ENCODE measurements at regions of chr5 and their contacts with region 1.

Region 1: DNA sequence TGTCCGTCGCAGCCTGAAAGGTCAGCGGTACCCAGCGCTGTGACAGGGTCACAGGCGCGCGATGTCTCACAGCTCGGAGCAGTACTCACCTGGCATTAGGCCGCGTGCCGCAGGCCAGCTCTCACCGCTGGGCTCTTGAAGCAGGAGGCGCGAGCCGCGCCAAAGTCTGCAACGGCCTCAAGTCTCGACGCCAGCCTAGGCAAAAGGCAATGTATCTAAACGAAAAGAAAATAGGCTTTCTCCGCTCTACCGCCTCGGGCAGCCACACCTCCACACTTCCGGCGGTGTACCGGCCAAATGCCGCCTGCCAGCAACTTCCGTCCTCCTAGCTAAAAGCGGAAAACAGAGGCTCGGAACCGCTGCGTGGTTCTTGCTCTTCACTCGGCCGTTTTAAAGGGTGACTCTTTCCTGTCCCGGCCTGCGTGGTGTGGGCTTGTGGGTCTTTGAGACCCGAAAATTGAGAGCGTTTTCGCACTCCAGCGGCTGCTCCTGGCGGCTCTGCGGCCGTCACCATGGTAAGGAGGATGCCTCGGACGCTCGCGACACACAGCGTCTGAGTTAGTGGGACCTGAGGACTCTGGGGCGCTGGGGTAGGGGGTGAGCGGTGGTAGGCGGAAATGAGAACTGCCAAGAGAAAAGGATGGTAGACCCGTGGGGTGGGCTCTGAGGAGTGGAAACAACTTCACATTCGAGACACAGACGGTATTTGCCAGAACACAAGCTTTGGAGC is at the starts of genes GFM2 and NSA2:
- DNase-seq: peak; percentile 96
- H3K4me3 Mint-ChIP-seq: peak within 1 kb of the TSS; percentile 99
- H3K27ac Mint-ChIP-seq: peak within 1 kb of the TSS; percentile 93
- H3K4me1 Mint-ChIP-seq: peaks cover 39% of the 10 kb centered on the region
- H3K27me3 Mint-ChIP-seq: no peaks in the 10 kb centered on the region
- total RNA-seq, gene GFM2: 27.7 to 28.0 TPM
- total RNA-seq, gene NSA2: 119 to 121 TPM

Region 2: DNA sequence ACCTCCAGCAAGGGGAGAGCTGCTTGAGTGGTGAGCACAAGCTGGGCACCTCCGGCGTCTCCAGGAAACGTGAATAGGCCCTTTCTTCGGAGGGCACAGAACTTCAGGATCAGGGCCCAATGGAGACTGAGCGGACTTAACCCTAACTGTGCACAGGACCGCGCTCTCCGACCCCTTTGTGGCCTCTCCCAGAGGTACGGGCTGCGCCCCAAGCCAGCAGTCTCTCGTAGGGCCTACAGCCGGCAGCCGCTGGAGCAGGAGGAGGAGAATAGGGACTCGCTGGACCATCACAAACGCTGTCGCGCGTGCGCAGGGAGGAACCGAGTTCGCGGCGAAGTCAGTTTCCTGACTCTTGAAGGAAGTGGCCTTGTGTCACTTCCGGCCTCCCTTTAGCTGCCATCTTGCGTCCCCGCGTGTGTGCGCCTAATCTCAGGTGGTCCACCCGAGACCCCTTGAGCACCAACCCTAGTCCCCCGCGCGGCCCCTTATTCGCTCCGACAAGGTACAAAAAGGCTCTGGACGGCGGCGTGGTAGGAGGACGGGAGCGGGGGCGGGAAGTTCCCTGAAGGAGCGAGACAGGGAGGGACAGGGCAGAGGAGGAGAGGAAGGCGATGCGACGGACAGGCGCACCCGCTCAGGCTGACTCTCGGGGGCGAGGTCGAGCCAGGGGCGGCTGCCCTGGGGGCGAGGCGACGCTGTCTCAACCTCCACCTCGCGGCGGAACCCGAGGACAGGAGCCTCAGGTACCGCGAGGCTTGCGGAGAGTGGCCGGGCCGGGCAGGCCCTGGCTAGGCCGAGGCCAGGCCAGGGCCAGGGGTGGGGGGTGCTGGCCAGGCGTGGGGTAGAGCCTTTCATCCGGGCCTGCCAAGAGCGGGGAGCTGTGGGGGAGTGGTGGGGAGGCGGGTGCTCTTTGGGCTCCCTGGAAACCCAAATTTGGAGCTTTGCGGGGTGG is 1268.7 kb before region 1 on chr5 and contains the start of gene BTF3:
- CTCF ChIA-PET with region 1: no interaction called
- intact Hi-C with region 1: loop called (anchors 5 kb)
- DNase-seq: peak; percentile 95
- H3K4me3 Mint-ChIP-seq: peak within 1 kb of the TSS; percentile 97
- H3K27ac Mint-ChIP-seq: peak within 1 kb of the TSS; percentile 96
- H3K4me1 Mint-ChIP-seq: peaks cover 42% of the 10 kb centered on the region
- H3K27me3 Mint-ChIP-seq: peaks cover 3% of the 10 kb centered on the region
- total RNA-seq, gene BTF3: 1,100 to 1,123 TPM

Region 3: DNA sequence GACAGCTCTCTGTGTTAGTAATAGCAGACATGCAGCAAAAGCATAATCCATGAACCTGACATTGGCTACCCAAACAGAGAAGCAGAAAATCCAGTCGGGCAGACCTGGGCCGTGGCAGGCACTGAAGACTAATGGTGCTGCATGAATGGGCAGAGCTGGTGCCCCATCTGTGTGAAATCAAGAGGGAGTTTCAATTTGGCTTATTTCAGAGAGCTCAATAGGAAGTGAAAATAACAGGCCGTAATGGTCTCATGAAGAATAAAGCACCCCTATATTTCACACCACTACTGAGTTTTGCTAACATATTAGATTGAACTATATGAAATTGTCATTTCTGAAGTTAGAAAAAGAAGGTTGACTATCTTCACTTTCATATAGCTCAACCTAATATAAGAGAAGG is 276.2 kb before region 1 on chr5:
- CTCF ChIA-PET with region 1: no interaction called
- intact Hi-C with region 1: no loop called
- DNase-seq: no peak
- H3K4me3 Mint-ChIP-seq: no peak overlapping the region
- H3K27ac Mint-ChIP-seq: no peak overlapping the region
- H3K4me1 Mint-ChIP-seq: no peaks in the 10 kb centered on the region
- H3K27me3 Mint-ChIP-seq: peaks cover 5% of the 10 kb centered on the region

Region 4: GRCh38 chr5:74684900-74685851 is 81.8 kb before region 1 on chr5 and contains the start of gene HEXB:
- CTCF ChIA-PET with region 1: no interaction called
- intact Hi-C with region 1: loop called (anchors 2 kb)
- DNase-seq: peak; percentile 92
- H3K4me3 Mint-ChIP-seq: peak within 1 kb of the TSS; percentile 71
- H3K27ac Mint-ChIP-seq: peak within 1 kb of the TSS; percentile 6
- H3K4me1 Mint-ChIP-seq: peaks cover 23% of the 10 kb centered on the region
- H3K27me3 Mint-ChIP-seq: no peaks in the 10 kb centered on the region
- total RNA-seq, gene HEXB: 65.6 to 70.0 TPM

Region 5: DNA sequence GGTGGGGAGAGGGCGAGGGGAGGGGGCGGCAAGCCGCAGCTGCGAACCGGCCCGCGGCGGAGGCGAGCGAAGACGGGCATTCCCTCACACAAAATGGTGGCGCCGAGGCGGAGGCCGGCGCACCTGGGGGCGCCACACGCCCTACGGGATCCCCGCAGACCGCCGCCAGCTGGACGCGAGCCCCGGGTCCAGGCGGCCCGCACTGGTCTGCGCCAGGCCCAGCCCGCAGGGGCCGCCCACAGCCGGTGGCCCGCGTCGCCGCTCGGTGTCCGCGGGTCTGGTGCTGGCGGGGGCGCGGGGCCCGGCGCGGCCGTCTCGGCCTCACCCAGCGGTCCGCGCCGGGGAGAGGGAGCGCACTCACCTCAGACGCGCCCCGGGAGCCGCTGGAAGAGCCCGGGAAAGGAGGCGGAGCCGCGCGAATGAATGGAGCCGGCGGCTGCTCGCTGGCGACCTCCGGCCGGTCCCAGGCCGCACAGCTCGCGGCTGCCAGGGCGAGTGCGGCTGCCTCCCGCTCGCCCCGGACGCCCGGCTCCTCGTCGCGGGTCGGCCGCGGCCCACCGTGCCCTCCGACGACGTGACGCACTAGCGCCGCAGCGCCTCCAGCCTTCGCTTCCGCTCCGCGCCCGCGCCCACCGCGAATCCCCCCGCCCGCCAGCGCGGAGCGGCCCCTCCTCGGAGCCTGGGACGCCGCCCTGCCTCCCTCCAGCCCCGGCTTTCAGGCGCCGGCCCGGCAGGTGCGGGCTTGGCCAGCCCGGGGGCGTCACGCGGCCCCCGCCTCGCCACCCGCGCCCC is 99.0 kb after region 1 on chr5 and contains the start of gene FAM169A:
- CTCF ChIA-PET with region 1: no interaction called
- intact Hi-C with region 1: loop called (anchors 2 kb)
- DNase-seq: peak; percentile 43
- H3K4me3 Mint-ChIP-seq: peak within 1 kb of the TSS; percentile 85
- H3K27ac Mint-ChIP-seq: peak within 1 kb of the TSS; percentile 83
- H3K4me1 Mint-ChIP-seq: peaks cover 28% of the 10 kb centered on the region
- H3K27me3 Mint-ChIP-seq: no peaks in the 10 kb centered on the region
- total RNA-seq, gene FAM169A: 9.3 to 10.7 TPM

Region 6: DNA sequence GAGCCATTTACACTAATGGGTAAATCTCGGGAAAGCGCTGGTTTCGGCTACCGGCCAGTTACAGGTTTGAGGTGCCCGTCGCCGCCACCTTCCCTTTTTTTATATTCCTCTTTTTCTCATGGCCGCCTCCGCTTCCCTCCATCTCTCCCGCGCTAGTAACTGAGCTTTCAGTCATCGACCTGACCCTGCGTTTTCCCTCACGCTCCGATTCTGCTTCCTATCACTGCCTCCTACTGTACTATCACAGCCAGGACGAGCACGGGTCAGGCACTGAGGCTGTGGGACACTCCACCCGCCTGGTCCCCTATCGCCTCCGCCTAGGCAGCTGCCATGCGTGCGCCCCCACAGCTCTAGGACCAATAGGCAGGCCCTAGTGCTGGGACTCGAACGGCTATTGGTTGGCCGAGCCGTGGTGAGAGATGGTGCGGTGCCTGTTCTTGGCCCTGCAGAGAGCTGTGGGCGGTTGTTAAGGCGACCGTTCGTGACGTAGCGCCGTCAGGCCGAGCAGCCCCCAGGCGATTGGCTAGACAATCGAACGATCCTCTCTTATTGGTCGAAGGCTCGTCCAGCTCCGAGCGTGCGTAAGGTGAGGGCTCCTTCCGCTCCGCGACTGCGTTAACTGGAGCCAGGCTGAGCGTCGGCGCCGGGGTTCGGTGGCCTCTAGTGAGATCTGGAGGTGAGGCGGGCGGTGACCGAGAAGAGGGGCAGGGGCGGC is 569.8 kb after region 1 on chr5 and contains the start of gene HMGCR:
- CTCF ChIA-PET with region 1: no interaction called
- intact Hi-C with region 1: loop called (anchors 2 kb)
- DNase-seq: peak; percentile 99
- H3K4me3 Mint-ChIP-seq: no peak within 1 kb of the TSS
- H3K27ac Mint-ChIP-seq: no peak within 1 kb of the TSS
- H3K4me1 Mint-ChIP-seq: peaks cover 35% of the 10 kb centered on the region
- H3K27me3 Mint-ChIP-seq: no peaks in the 10 kb centered on the region
- total RNA-seq, gene HMGCR: 61.7 to 67.5 TPM

Measured in activated naive CD4-positive, alpha-beta T cell treated with anti-CD3 and anti-CD28 coated beads for 36 hours (primary cell).